Caco-2 (cell line): ENCODE measurements at regions of chr10 and their contacts with region 1.

Region 1: DNA sequence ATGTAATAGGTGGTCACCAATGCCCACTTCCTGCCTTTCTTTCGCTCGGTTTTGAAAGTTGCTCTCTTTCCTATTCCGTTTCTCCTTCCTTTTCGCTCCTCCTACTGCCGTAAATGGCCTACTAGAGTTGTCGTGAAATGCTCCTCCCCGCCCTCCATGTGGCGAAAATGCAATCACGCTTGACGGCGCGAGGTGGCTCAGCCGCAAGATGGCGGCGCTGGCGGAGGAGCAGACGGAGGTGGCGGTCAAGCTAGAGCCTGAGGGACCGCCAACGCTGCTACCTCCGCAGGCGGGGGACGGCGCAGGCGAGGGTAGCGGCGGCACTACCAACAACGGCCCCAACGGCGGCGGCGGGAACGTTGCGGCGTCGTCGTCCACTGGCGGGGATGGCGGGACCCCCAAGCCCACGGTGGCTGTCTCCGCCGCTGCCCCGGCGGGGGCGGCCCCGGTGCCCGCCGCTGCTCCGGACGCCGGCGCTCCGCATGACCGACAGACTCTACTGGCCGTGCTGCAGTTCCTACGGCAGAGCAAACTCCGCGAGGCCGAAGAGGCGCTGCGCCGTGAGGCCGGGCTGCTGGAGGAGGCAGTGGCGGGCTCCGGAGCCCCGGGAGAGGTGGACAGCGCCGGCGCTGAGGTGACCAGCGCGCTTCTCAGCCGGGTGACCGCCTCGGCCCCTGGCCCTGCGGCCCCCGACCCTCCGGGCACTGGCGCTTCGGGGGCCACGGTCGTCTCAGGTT is at the start of gene TAF5:
- DNase-seq: peak; percentile 94 to 95
- H3K4me3 ChIP-seq: peak within 1 kb of the TSS; percentile 82
- H3K4me3 Mint-ChIP-seq: peak within 1 kb of the TSS; percentile 97
- H3K27ac Mint-ChIP-seq: peak within 1 kb of the TSS; percentile 89
- H3K4me1 ChIP-seq: 0 out of 2 replicates have a peak, but pooled peaks cover 6% of the 10 kb centered on the region
- H3K4me1 Mint-ChIP-seq: no peaks in the 10 kb centered on the region
- H3K27me3 ChIP-seq: no peaks in the 10 kb centered on the region
- H3K27me3 Mint-ChIP-seq: no peaks in the 10 kb centered on the region
- CTCF ChIP-seq: no peak
- total RNA-seq, gene TAF5: 6.3 and 6.8 TPM in 2 replicates

Region 2: DNA sequence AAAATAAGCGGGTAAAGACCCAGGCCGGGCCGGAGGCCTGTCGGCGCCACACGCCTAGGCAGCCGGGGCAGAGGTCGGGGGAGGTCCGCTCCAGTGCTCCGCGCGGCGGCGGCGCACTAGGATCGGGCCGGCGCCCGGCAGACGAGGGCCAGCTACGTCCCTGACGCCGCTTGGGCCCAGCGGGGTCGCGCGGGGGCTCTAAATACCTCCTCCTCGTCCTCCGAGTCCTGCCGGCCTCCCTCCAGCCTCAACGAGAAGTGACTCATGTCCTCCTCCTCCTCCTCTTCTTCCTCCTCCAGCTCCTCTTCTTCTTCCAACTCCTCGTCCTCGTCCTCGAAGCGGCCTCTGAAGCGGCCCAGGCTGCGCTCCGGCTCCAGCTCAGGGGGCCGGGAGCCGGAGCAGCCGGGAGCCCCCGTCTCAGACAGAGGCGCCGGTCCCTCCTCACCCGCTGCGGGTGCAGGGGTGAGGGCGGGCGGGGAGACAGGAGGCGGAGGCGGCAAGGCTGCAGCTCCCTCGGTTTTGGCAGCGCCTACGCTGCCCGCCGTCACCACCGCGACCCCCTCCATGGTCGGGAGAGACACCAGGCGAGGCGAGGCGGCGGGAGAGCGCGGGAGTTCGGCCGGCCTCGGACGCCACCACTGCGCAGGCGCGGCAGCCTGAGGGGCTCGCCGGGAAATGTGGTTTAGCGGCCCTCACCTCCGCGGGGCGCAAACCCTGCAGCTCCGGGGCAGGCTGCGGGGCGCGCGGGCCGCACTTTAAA is 17.3 kb before region 1 on chr10 and contains the start of gene PCGF6:
- CTCF ChIA-PET with region 1: no interaction called
- POLR2A ChIA-PET with region 1: interaction called, 10 read pairs
- intact Hi-C with region 1: loop called (anchors 2 kb)
- DNase-seq: peak; percentile 84 to 93
- H3K4me3 ChIP-seq: peak within 1 kb of the TSS; percentile 79
- H3K4me3 Mint-ChIP-seq: peak within 1 kb of the TSS; percentile 79
- H3K27ac Mint-ChIP-seq: peak within 1 kb of the TSS; percentile 76
- H3K4me1 ChIP-seq: no peaks in the 10 kb centered on the region
- H3K4me1 Mint-ChIP-seq: no peaks in the 10 kb centered on the region
- H3K27me3 ChIP-seq: no peaks in the 10 kb centered on the region
- H3K27me3 Mint-ChIP-seq: no peaks in the 10 kb centered on the region
- CTCF ChIP-seq: peak in 1 of 2 experiments; percentile 7
- total RNA-seq, gene PCGF6: 20.4 and 21.6 TPM in 2 replicates

Region 3: GRCh38 chr10:103396064-103396788 is 28.3 kb after region 1 on chr10 and contains the starts of genes ATP5MK and PDCD11:
- CTCF ChIA-PET with region 1: no interaction called
- POLR2A ChIA-PET with region 1: interaction called, 14 read pairs
- intact Hi-C with region 1: loop called (anchors 1 kb)
- DNase-seq: peak; percentile 97 to 98
- H3K4me3 ChIP-seq: peak within 1 kb of the TSS; percentile 91
- H3K4me3 Mint-ChIP-seq: peak within 1 kb of the TSS; percentile 92
- H3K27ac Mint-ChIP-seq: peak within 1 kb of the TSS; percentile 96
- H3K4me1 ChIP-seq: peaks cover 7% of the 10 kb centered on the region; the same call in 1 of the 2 replicates
- H3K4me1 Mint-ChIP-seq: peaks cover 23% of the 10 kb centered on the region
- H3K27me3 ChIP-seq: no peaks in the 10 kb centered on the region
- H3K27me3 Mint-ChIP-seq: no peaks in the 10 kb centered on the region
- CTCF ChIP-seq: peak in 1 of 2 experiments; percentile 32
- total RNA-seq, gene ATP5MK: 340 and 369 TPM in 2 replicates
- total RNA-seq, gene PDCD11: 55.3 and 62.8 TPM in 2 replicates